ENCODE measurements at regions of chr6 and their contacts with region 1.

Region 1: DNA sequence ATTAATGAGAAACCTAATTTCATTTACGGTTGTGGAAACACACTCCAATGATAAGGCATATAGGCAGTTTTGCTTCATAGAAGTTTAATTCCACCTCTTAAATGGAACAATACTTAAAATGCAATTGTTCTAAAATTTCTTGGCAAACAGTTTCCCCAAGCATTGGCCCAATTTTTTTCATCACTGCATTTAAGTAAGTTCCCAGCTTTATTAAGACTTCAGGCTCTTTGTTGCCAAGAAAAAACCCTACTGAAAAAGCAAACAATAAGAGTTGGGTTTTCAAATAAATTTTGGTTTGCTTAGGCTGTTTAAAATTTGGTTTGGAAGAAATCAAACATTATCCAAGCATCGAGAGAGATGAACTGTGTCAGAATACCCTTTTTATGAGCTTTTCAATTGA is 690.9 kb upstream of the NRSN1 start:
- DNase-seq: no peak
- ATAC-seq: no peak
- H3K4me3 ChIP-seq: no peak overlapping the region
- H3K27ac ChIP-seq: no peak overlapping the region
- H3K4me1 ChIP-seq: no peaks in the 10 kb centered on the region
- H3K27me3 ChIP-seq: no peaks in the 10 kb centered on the region
- CTCF ChIP-seq: no peak

Region 2: DNA sequence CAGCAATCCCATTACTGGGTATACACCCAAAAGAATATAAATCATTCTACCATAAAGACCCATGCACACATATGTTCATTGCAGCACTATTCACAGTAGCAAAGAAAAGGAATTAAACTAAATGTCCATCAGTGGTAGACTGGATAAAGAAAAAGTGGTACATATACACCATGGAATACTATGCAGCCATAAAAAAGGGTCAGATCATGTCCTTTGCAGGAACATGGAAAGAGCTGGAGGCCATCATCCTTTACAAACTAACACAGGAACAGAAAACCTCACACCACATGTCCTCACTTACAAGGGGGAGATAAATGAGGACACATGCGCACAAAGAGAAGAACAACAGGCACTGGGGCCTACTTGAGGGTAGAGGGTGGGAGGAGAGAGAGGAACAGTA is 861.8 kb after region 1 on chr6:
- intact Hi-C with region 1: loop called in 1 of 10 experiments (anchors 10 kb)
- DNase-seq: no peak
- ATAC-seq: no peak
- H3K4me3 ChIP-seq: no peak overlapping the region
- H3K27ac ChIP-seq: no peak overlapping the region
- H3K4me1 ChIP-seq: no peaks in the 10 kb centered on the region
- H3K27me3 ChIP-seq: peaks cover 0 to 8% (median 0%) of the 10 kb centered on the region in 7 donors
- CTCF ChIP-seq: no peak

Measured in heart right ventricle (tissue), 16 donors.